HCT116 (cell line): ENCODE measurements at regions of chr3 and their contacts with region 1.

Region 1: DNA sequence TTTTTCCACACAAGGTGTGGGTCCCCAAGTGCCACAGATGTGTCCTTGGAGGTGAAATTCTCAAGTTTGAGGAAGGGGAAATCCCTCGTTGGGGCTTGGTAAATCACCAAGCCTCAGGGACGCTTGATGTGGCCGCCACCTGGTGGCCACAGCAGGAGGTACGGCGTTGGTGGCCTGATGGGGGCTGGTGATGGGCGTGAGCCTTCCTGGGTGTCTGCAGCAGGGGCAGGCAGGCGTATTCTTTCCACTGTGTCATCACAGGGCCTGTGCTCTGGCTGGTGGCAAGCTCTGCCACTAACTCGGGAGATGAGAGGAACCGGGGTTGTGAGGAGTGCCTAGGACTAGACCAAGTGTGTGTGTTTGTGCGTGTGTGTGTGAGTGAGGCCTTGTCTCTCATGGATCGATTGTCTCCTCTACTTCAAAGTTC is 4.2 kb downstream of the ACOX2 start:
- DNase-seq: peak; percentile 69
- ATAC-seq: peak; percentile 91
- H3K4me3 ChIP-seq: 0 out of 4 replicates have a peak overlapping the region, but pooled peaks of 1 of the 2 experiments have one; percentile 12
- H3K27ac ChIP-seq: no peak overlapping the region
- H3K4me1 ChIP-seq: peaks cover 2 to 14% of the 10 kb centered on the region in 2 experiments; a peak in 2 of 4 replicates
- H3K27me3 ChIP-seq: no peaks in the 10 kb centered on the region
- CTCF ChIP-seq: peak; percentile 91 to 95 (median 94)
- POLR2A ChIP-seq: no peak
- RAD21 ChIP-seq: peak; percentile 95

Region 2: DNA sequence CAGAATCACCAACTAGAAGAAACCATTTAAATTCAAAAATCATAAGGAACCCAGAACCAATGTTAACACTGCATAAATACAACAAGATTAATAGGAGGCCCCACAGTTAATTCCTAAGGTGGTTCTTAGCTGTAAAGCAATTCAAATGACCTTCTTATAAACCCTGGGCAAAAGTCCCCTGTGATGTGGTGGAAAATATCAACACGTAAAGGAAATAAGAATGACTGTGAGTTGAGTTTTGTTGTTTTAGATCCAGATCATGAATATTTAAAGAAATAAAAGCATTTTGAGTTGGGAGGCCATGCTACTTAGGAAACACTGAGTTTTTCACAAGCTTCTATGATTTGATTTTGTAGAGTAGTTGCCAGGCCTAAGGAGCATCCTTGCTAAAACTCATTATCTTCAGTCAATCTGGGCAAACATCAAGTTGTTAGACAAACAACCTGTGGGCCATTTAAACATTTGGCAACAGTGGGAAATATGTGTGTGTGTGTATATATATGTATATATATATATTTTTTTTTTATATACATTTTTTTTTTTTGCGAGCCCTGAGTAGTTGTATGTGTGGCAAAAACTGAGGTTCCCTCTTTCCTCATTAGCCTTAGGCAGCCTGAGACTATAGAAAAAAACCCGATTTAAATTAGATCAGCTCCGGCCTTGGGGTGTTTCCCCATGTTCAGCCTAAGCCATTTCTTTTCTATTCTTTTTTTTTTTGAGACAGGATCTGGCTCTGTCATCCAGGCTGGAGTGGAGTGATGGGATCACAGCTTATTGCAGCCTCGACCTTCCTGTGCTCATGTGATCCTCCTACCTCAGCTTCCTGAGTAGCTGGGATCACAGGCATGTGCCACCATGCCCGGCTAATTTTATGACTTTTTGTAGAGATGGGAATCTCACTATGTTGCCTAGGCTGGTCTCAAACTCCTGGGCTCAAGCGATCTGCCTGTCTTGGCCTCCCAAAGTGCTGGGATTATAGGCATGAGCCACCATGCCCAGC is 208.1 kb before region 1 on chr3:
- CTCF ChIA-PET with region 1: no interaction called
- POLR2A ChIA-PET with region 1: no interaction called
- RAD21 ChIA-PET with region 1: no interaction called
- intact Hi-C with region 1: loop called (anchors 2 kb)
- DNase-seq: no peak
- ATAC-seq: no peak
- H3K4me3 ChIP-seq: no peak overlapping the region
- H3K27ac ChIP-seq: no peak overlapping the region
- H3K4me1 ChIP-seq: no peaks in the 10 kb centered on the region
- H3K27me3 ChIP-seq: no peaks in the 10 kb centered on the region
- CTCF ChIP-seq: no peak
- POLR2A ChIP-seq: no peak
- RAD21 ChIP-seq: no peak

Region 3: GRCh38 chr3:58411036-58411435 is 121.8 kb before region 1 on chr3:
- CTCF ChIA-PET with region 1: no interaction called
- POLR2A ChIA-PET with region 1: no interaction called
- RAD21 ChIA-PET with region 1: no interaction called
- intact Hi-C with region 1: no loop called
- DNase-seq: no peak
- ATAC-seq: no peak
- H3K4me3 ChIP-seq: no peak overlapping the region
- H3K27ac ChIP-seq: no peak overlapping the region
- H3K4me1 ChIP-seq: peaks cover 2 to 3% of the 10 kb centered on the region in 2 experiments; a peak in 3 of 4 replicates
- H3K27me3 ChIP-seq: no peaks in the 10 kb centered on the region
- CTCF ChIP-seq: no peak
- POLR2A ChIP-seq: no peak
- RAD21 ChIP-seq: no peak

Region 4: GRCh38 chr3:58422756-58423325 is 110.0 kb before region 1 on chr3:
- CTCF ChIA-PET with region 1: no interaction called
- POLR2A ChIA-PET with region 1: no interaction called
- RAD21 ChIA-PET with region 1: no interaction called
- intact Hi-C with region 1: loop called (anchors 2 kb)
- DNase-seq: no peak
- ATAC-seq: peak; percentile 66
- H3K4me3 ChIP-seq: no peak overlapping the region
- H3K27ac ChIP-seq: no peak overlapping the region
- H3K4me1 ChIP-seq: no peaks in the 10 kb centered on the region
- H3K27me3 ChIP-seq: no peaks in the 10 kb centered on the region
- CTCF ChIP-seq: peak in 1 of 3 experiments; percentile 29; a peak in 2 of 6 replicates
- POLR2A ChIP-seq: no peak
- RAD21 ChIP-seq: peak; percentile 38; the same call in 1 of the 2 replicates

Region 5: DNA sequence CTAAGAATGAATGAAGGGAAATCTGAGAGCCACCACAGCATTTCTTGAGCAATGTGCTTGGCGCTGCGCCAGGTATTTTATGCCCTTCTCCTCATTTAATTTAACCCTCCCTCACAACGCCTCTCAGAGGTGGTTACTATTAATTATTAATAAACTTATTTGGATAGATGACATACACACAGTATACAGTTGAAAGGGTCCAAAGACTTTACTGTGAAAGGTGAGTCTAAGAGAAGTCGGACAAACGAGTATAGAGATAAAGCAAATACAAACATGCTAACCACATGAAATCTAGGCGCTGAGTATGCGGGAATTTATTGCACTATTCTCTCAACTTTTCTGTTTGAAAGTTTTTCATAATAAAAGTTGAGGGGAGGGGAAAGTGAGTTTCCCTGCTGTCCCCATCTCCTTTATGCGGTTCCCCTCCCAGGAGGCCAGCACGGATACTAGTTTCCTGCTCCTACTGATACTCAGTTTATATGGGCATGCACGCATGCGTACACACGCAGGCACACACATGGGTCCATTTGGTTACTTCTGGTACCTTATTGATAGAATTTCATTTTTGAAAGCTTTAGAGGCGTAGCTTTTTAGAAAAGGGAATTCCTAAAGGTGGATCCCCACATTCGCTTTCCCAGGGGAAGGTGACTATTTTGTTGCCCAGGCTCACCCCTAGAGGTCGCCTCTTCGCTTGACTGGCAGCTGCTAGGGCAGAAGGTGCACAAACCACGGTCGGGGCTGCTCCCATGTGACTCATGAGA is 69.4 kb before region 1 on chr3:
- CTCF ChIA-PET with region 1: interaction called, 3 read pairs
- POLR2A ChIA-PET with region 1: no interaction called
- RAD21 ChIA-PET with region 1: no interaction called
- intact Hi-C with region 1: loop called (anchors 1 kb)
- DNase-seq: peak; percentile 76
- ATAC-seq: peak; percentile 99
- H3K4me3 ChIP-seq: no peak overlapping the region
- H3K27ac ChIP-seq: no peak overlapping the region
- H3K4me1 ChIP-seq: peaks cover 0 to 12% of the 10 kb centered on the region in 2 experiments; a peak in 3 of 4 replicates
- H3K27me3 ChIP-seq: no peaks in the 10 kb centered on the region
- CTCF ChIP-seq: peak; percentile 89 to 96 (median 91); a peak in 5 of 6 replicates
- POLR2A ChIP-seq: peak; percentile 23
- RAD21 ChIP-seq: peak; percentile 89

Region 6: GRCh38 chr3:58711871-58712270 is 179.1 kb after region 1 on chr3:
- CTCF ChIA-PET with region 1: no interaction called
- POLR2A ChIA-PET with region 1: no interaction called
- RAD21 ChIA-PET with region 1: no interaction called
- intact Hi-C with region 1: no loop called
- DNase-seq: no peak
- ATAC-seq: no peak
- H3K4me3 ChIP-seq: no peak overlapping the region
- H3K27ac ChIP-seq: no peak overlapping the region
- H3K4me1 ChIP-seq: no peaks in the 10 kb centered on the region
- H3K27me3 ChIP-seq: no peaks in the 10 kb centered on the region
- CTCF ChIP-seq: no peak
- POLR2A ChIP-seq: no peak
- RAD21 ChIP-seq: no peak

Region 7: GRCh38 chr3:59107856-59108815 is 575.3 kb after region 1 on chr3:
- CTCF ChIA-PET with region 1: no interaction called
- POLR2A ChIA-PET with region 1: no interaction called
- RAD21 ChIA-PET with region 1: no interaction called
- intact Hi-C with region 1: no loop called
- DNase-seq: no peak
- ATAC-seq: no peak
- H3K4me3 ChIP-seq: no peak overlapping the region
- H3K27ac ChIP-seq: no peak overlapping the region
- H3K4me1 ChIP-seq: no peaks in the 10 kb centered on the region
- H3K27me3 ChIP-seq: no peaks in the 10 kb centered on the region
- CTCF ChIP-seq: no peak
- POLR2A ChIP-seq: no peak
- RAD21 ChIP-seq: no peak